Activated T-helper 1 cell treated with anti-CD3 and anti-CD28 coated beads, Interleukin-12 subunit alpha, Interleukin-12 subunit beta, Interleukin-2, Interleukin-4 antibody, amounts not matched to agents 30 ng/mL and 10 ng/mL and 1 ng/mL, durations not matched to agents 14 hours and 24 hours and 36 hours (primary cell): ENCODE measurements at regions of chr2 and their contacts with region 1.

Region 1: GRCh38 chr2:227890495-227891079 is 19.2 kb downstream of the DAW1 start:
- DNase-seq: no peak
- H3K4me3 Mint-ChIP-seq: no peak overlapping the region
- H3K27ac Mint-ChIP-seq: no peak overlapping the region
- H3K4me1 Mint-ChIP-seq: no peaks in the 10 kb centered on the region
- H3K27me3 Mint-ChIP-seq: peaks cover 2% of the 10 kb centered on the region

Region 2: GRCh38 chr2:229586746-229587705 is 1696.4 kb after region 1 on chr2:
- intact Hi-C with region 1: loop called (anchors 5 kb)
- DNase-seq: no peak
- H3K4me3 Mint-ChIP-seq: no peak overlapping the region
- H3K27ac Mint-ChIP-seq: no peak overlapping the region
- H3K4me1 Mint-ChIP-seq: peaks cover 5% of the 10 kb centered on the region
- H3K27me3 Mint-ChIP-seq: peaks cover 2% of the 10 kb centered on the region